Ovary (tissue), 10 donors: ENCODE measurements at regions of chr21 and their contacts with region 1.

Region 1: DNA sequence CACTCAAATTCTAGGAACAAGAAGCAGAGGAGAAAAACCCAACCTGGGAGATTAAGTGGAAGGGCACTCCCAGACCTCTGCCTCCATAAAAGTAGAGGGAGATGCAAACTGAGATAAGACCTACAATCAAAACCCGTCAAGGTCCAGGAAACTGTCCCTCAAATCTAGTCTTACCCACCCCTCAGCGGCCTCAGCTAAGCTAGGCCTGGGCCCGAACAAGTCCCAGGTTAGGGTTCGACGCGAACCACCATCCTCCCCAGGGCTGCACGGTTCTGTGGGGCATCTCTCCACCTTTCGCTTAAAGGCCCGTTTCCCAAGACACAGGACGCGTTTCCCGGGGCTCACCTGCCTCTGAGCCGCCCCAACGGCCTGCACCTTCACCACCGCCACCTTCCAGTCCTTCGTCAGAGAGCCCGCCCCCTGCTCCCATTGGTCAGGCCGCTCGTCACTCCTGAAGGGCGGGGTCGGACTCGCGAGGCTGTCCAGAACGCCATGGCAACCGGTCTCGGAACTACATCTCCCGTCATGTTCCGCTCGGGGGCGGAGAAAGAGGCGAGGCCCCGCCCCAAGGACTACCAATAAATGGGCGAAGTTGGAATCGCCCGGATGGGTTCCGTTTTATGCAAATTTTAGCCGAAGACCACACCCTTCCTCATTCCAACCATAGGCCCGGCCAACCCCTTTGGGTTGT is at the start of gene CRYZL1:
- DNase-seq: peak; percentile 100
- H3K4me3 ChIP-seq: peak within 1 kb of the TSS; percentile 65
- H3K27ac ChIP-seq: peak within 1 kb of the TSS; percentile 59 to 84
- H3K4me1 ChIP-seq: peaks cover 8% of the 10 kb centered on the region
- H3K27me3 ChIP-seq: no peaks in the 10 kb centered on the region
- CTCF ChIP-seq: no peak
- EP300 ChIP-seq: no peak
- POLR2A ChIP-seq: peak; percentile 57
- total RNA-seq, gene CRYZL1: 27.2 to 59.6 (median 45.9) TPM

Region 2: GRCh38 chr21:33542640-33543504 is 98.6 kb before region 1 on chr21 and contains the start of gene SON:
- intact Hi-C with region 1: loop called in 1 of 4 experiments (anchors 5 kb)
- DNase-seq: peak; percentile 97 to 99 (median 98)
- H3K4me3 ChIP-seq: peak within 1 kb of the TSS; percentile 88
- H3K27ac ChIP-seq: peak within 1 kb of the TSS; percentile 92 to 94
- H3K4me1 ChIP-seq: peaks cover 5% of the 10 kb centered on the region
- H3K27me3 ChIP-seq: no peaks in the 10 kb centered on the region
- CTCF ChIP-seq: no peak
- EP300 ChIP-seq: peak; percentile 51
- POLR2A ChIP-seq: peak; percentile 94
- total RNA-seq, gene SON: 216 to 351 (median 271) TPM

Region 3: GRCh38 chr21:33703750-33704606 is 62.5 kb after region 1 on chr21:
- intact Hi-C with region 1: loop called in 1 of 4 experiments (anchors 10 kb)
- DNase-seq: no peak
- H3K4me3 ChIP-seq: no peak overlapping the region
- H3K27ac ChIP-seq: no peak overlapping the region
- H3K4me1 ChIP-seq: peaks cover 4% of the 10 kb centered on the region
- H3K27me3 ChIP-seq: no peaks in the 10 kb centered on the region
- CTCF ChIP-seq: no peak
- EP300 ChIP-seq: no peak
- POLR2A ChIP-seq: no peak

Region 4: DNA sequence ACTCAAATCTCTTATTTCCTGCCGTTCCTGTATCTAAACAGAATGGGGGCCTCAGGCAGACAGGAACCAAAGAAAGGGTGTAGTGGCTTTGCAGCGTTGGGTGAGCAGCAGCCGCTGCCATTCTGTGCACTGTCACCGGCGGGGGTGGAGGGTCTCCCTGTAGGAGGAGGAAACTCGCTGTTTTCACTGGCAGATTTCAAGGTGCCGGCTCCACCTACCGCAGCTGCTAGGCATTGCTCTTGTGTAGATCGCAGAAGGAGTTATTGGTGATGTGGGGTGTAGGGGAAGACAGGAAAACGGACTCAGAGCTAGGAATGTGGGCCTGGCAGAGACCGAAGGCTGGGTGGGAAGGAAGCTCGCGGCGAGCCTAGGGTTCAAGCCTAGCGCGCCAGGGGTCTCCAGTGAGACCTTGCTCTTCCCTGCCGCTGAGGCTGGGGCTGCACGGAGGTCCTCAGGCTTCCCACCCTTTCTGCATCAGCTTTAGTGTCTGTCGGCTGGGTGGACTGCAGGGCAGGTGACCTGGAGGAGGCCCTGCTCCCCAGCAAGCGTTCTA is 253.3 kb after region 1 on chr21:
- intact Hi-C with region 1: loop called (anchors 5 to 10 kb)
- DNase-seq: peak; percentile 68 to 81 (median 77)
- H3K4me3 ChIP-seq: peak overlapping the region; percentile 21
- H3K27ac ChIP-seq: no peak overlapping the region
- H3K4me1 ChIP-seq: peaks cover 5% of the 10 kb centered on the region
- H3K27me3 ChIP-seq: no peaks in the 10 kb centered on the region
- CTCF ChIP-seq: peak; percentile 38 to 55 (median 53)
- EP300 ChIP-seq: no peak
- POLR2A ChIP-seq: no peak